Heart left ventricle (tissue), 16 donors: ENCODE measurements at regions of chr1 and their contacts with region 1.

Region 1: DNA sequence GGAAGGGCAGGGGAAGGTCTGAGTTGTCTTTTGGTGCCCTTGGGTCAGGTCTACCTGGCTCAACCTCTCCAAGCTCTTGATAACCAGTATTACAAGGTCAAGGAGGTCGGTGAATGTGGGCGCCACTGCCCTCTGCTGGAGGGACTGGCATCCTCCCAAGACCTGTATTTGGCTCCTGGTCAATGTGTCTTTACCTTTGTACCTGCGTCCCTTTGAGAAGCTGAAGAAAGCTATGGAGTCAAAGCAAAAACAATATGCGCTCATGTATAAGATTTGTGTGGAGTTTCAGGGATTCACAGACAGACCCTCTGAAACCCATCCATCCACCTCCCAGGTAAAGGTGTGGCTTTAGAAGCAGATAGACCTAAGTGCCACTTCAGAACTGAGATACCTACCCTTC is 61.8 kb upstream of the NBL1 start:
- DNase-seq: peak in 4 of 5 donors; percentile 31 to 77 (median 40)
- ATAC-seq: peak in 2 of 4 donors; percentile 62 to 65
- H3K4me3 ChIP-seq: no peak overlapping the region
- H3K27ac ChIP-seq: no peak overlapping the region
- H3K4me1 ChIP-seq: peaks cover 0 to 9% (median 0%) of the 10 kb centered on the region in 12 donors
- H3K27me3 ChIP-seq: no peaks in the 10 kb centered on the region
- CTCF ChIP-seq: peak; percentile 37 to 71 (median 56)
- POLR2A ChIP-seq: no peak

Region 2: DNA sequence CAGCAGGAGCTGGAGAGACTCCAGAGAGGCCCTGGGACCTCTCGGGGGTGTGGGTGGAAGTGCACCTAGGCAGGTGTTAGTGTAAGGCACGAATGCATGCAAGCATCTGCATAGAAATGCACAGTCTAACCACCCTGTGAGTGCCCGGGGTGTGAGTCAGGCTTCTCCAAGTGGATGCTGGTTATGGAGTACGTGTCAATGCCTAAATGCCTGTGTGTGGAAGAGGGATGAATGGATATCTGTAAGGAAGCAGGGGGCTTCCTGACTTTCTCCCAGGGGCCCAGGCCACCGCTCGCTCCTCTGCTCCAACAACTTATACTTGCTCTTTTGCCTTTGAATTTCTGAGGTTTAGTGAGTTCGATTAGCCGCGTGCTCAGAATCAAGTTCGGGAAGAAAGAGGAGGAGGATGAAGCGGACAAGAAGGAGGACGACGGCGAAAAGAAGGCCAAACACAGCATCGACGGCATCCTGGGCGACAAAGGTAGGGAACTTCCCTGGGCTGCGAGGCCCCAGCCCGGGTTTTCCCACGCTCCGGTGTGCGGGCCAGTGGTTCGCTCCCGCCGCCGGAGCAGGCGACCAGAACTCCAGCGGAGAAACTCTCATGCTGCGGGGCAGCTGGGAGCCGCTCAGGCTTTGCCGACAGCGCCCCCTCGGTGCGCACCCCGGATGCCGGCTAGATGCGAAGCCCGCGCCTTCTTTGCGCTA is 946.3 kb before region 1 on chr1:
- intact Hi-C with region 1: no loop called
- DNase-seq: no peak
- ATAC-seq: no peak
- H3K4me3 ChIP-seq: no peak overlapping the region
- H3K27ac ChIP-seq: no peak overlapping the region
- H3K4me1 ChIP-seq: peaks cover 0 to 18% (median under 1%) of the 10 kb centered on the region in 12 donors
- H3K27me3 ChIP-seq: peaks cover 82 to 100% (median 99%) of the 10 kb centered on the region in 9 donors
- CTCF ChIP-seq: no peak
- POLR2A ChIP-seq: no peak

Region 3: GRCh38 chr1:19495799-19496624 is 86.3 kb before region 1 on chr1:
- intact Hi-C with region 1: loop called in 1 of 10 experiments (anchors 5 kb)
- DNase-seq: no peak
- ATAC-seq: peak in 3 of 4 donors; percentile 12 to 30 (median 22)
- H3K4me3 ChIP-seq: no peak overlapping the region
- H3K27ac ChIP-seq: peak overlapping the region; percentile 12 to 95 (median 78)
- H3K4me1 ChIP-seq: peaks cover 0 to 27% (median 22%) of the 10 kb centered on the region in 12 donors
- H3K27me3 ChIP-seq: no peaks in the 10 kb centered on the region
- CTCF ChIP-seq: no peak
- POLR2A ChIP-seq: no peak